ENCODE measurements at regions of chr17 and their contacts with region 1.

Region 1: GRCh38 chr17:55348749-55349354 is 72.8 kb downstream of the MMD start:
- DNase-seq: peak; percentile 15 to 81 (median 53)

Region 2: DNA sequence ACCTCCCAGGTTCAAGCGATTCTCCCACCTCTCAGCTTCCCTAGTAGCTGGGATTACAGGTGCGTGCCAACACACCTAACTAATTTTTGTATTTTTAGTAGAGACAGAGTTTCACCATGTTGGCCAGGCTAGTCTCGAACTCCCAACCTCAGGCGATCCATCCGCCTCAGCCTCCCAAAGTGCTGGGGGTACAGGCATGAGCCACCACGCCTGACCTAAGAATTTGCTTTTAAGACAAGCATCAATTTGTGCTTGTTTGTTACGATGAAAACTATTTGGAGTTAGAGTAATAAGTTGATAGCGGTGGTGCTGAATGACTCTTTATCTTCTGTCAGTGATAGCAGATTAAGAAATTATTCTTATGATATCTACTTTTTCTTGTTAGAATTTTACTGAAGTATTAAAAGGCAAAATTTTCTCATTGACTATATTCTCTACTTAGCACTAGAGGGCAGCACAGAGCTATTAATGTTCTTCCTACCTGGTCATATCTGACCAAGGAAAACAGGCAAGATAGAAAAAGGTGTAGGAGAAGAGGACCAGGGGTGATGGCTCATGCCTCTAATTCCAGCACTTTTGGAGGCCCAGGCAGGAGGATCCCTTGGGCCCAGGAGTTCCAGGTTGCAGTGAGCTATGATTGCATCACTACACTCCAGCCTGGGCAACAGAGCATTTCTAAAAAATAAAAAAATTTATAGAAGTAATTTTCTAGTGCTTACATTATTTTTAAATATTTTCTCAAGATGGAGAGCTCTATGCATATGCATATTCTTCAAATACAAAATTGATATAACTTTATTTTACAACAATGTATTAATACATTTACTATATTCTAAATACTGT is 355.8 kb before region 1 on chr17:
- intact Hi-C with region 1: loop called (anchors 10 kb)
- DNase-seq: peak in 3 of 42 donors; percentile 4 to 37 (median 14)

Measured in head of caudate nucleus (tissue), 42 donors.